ENCODE measurements at regions of chr19 and their contacts with region 1.

Region 1: DNA sequence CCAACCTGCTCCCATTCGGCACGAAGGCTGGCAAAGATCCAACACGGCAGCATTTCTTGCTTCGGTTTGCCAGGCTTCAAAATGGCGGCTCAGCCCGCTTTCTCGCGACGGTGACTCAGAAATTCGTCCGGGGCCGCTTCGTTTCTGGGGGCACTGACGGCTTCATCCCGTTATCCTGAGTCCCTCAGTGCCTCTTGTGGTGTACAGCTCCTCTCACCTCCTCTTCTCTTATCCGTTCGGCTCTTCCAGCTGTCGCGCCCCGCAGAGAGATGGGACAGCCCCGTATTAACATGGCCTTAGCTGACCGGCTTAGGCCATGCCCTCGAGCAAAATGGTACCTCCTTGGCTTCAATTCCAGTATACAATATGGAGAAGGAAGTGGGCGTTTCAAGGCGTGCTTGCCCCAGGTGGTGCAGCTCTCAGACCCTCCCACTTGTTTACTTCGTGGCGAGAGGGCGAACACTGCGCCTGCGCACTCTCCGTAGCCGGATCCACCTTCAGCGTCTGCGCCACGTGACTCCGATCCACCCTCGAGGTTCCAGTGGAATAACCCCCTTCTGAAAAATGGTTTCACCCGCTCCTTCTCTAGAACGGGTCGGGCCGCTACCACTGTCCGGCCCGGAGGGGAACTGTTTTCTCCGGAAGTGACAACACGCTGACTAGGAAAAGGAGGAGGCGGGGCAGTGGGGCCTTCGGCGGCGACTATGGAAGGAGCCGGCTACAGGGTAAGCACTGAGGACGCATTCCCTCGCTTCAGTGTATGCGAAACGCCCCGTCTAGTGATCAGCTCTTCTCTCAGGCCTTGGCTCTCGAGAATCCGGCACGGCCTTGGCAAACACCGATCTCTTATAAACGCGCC is at the starts of genes AKT1S1 and TBC1D17:
- DNase-seq: peak; percentile 100
- ATAC-seq: peak; percentile 85
- H3K4me3 ChIP-seq: peak within 1 kb of the TSS; percentile 90
- H3K27ac ChIP-seq: peak within 1 kb of the TSS; percentile 95
- H3K4me1 ChIP-seq: peaks cover 16% of the 10 kb centered on the region
- H3K27me3 ChIP-seq: no peaks in the 10 kb centered on the region
- CTCF ChIP-seq: no peak
- EP300 ChIP-seq: no peak; a peak in 1 of 4 replicates
- POLR2A ChIP-seq: peak; percentile 86
- RAD21 ChIP-seq: no peak
- polyA plus RNA-seq, gene AKT1S1: 0.43 to 1.2 TPM
- polyA plus RNA-seq, gene TBC1D17: 0.42 to 0.52 TPM

Region 2: DNA sequence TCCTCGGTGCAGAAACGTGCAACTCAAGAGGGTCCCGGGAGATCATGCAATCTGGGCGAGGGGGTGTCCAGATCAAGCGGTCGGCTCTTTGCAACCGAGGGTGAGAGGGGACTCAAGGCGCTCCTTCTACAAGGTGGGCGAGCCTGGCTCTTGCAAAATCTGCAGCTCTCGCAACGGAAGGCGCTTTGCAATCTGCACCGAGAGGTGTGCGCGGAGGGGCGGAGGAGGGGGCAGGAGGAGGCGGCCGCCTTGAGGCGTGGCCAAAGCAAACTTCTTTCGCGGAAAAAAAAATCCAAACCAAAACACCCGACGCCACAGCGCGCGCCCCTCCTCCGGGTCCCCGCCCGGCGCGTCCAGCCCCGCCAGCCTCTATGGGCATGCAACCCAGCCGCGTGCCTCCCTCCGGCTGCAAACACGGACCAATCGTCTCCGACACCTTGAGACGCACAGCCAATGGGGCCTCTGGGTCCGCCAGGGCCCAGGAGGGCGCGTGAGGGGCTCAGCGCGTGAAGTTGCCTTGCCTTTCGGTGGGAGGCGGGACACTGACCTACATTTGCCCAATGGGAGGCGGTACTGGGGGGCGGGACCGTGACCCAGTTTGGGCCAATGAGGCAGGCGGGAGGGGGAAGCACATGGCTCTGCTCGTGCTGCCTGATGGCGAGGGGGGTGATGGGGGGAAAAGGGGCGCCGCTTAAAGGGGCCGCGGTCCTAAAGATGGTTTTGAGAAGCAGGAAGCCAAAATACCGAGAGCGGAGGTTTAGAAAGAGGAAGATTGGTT is 1239.9 kb before region 1 on chr19 and contains the start of gene DBP:
- CTCF ChIA-PET with region 1: no interaction called
- POLR2A ChIA-PET with region 1: no interaction called
- RAD21 ChIA-PET with region 1: no interaction called
- SMC1A ChIA-PET with region 1: no interaction called
- in situ Hi-C with region 1: loop called (anchors 25 kb)
- intact Hi-C with region 1: no loop called
- DNase-seq: peak; percentile 96
- ATAC-seq: peak; percentile 85
- H3K4me3 ChIP-seq: peak within 1 kb of the TSS; percentile 89
- H3K27ac ChIP-seq: peak within 1 kb of the TSS; percentile 93
- H3K4me1 ChIP-seq: peaks cover 28% of the 10 kb centered on the region
- H3K27me3 ChIP-seq: no peaks in the 10 kb centered on the region
- CTCF ChIP-seq: no peak; a peak in 1 of 6 replicates
- EP300 ChIP-seq: no peak; a peak in 2 of 4 replicates
- POLR2A ChIP-seq: peak; percentile 65; the same call in 1 of the 2 replicates
- RAD21 ChIP-seq: no peak
- polyA plus RNA-seq, gene DBP: 2.0 to 2.6 TPM

Region 3: DNA sequence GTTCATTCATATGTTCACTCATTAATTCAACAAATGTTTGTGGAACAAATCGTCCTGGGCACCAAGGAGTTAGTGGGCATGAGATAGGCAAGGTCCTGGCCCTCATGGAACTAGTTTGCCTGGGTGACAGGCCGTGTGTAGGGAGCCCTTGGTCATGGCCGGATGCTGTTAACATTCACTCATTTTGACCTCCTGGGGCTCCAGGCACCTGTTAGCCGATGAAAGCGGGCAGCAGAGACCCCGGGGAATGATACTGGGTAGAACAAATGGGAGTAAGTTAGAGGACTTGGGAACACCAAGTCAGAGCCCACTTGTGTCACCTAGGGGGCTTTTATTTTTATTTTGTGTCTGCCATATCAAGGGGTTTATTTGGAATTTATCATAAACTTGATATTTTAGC is 52.6 kb before region 1 on chr19:
- CTCF ChIA-PET with region 1: no interaction called
- POLR2A ChIA-PET with region 1: no interaction called
- RAD21 ChIA-PET with region 1: no interaction called
- SMC1A ChIA-PET with region 1: no interaction called
- in situ Hi-C with region 1: no loop called
- intact Hi-C with region 1: no loop called
- DNase-seq: no peak
- ATAC-seq: no peak
- H3K4me3 ChIP-seq: no peak overlapping the region
- H3K27ac ChIP-seq: no peak overlapping the region
- H3K4me1 ChIP-seq: peaks cover 5% of the 10 kb centered on the region; the same call in 1 of the 2 replicates
- H3K27me3 ChIP-seq: no peaks in the 10 kb centered on the region
- CTCF ChIP-seq: no peak
- EP300 ChIP-seq: no peak
- POLR2A ChIP-seq: no peak
- RAD21 ChIP-seq: no peak

Region 4: GRCh38 chr19:49850473-49851342 is 26.5 kb before region 1 on chr19 and contains the start of gene PTOV1:
- CTCF ChIA-PET with region 1: no interaction called
- POLR2A ChIA-PET with region 1: interaction called, 9 read pairs
- RAD21 ChIA-PET with region 1: interaction called, 3 read pairs
- SMC1A ChIA-PET with region 1: no interaction called
- in situ Hi-C with region 1: no loop called
- intact Hi-C with region 1: loop called (anchors 2 kb)
- DNase-seq: peak; percentile 59
- ATAC-seq: peak; percentile 91
- H3K4me3 ChIP-seq: peak within 1 kb of the TSS; percentile 71
- H3K27ac ChIP-seq: peak within 1 kb of the TSS; percentile 64
- H3K4me1 ChIP-seq: peaks cover 26% of the 10 kb centered on the region
- H3K27me3 ChIP-seq: no peaks in the 10 kb centered on the region
- CTCF ChIP-seq: no peak
- EP300 ChIP-seq: no peak
- POLR2A ChIP-seq: peak; percentile 87
- RAD21 ChIP-seq: no peak
- polyA plus RNA-seq, gene PTOV1: 3.2 to 10.6 TPM

Region 5: DNA sequence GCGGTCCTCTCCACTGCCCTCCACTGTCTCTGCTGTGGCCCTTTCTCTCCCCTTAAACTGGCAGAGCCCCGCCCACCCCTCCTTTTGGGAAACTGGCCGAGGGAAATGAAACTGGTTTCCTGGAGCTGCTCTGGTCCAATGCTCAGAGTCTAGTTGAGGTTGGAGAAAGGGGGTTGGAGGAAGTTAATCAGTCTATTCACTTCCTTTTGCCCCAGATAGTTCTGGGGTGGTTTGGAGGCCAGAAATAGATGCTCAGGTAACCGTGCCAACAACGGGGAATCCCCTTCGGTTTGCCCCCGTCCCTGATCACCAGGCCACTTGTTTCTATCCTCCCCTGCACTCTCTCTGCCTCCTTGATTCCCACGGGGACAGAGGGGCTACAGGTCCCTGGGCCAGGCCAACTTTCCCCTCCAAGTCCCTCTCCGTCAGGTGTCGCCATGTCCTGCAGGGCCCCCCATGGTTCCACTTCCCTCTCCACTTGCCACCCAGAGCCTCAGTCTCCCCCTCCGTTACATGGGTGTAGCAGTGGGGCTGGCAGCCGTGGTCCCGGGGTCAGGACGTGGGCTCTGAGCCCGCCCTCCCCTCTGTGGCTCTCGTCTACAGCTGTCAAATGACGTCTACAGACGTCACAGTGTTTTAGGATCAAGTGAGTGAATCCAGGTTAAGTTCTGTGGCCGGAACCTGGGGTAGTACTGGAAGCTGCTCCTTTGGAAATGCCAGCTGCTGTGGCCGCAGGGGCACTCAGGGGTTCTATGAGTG is 19.8 kb after region 1 on chr19 and contains the start of gene IL4I1:
- CTCF ChIA-PET with region 1: no interaction called
- POLR2A ChIA-PET with region 1: interaction called, 8 read pairs
- RAD21 ChIA-PET with region 1: interaction called, 3 read pairs
- SMC1A ChIA-PET with region 1: interaction called, 5 read pairs
- in situ Hi-C with region 1: no loop called
- intact Hi-C with region 1: loop called (anchors 2 kb)
- DNase-seq: peak; percentile 96
- ATAC-seq: peak; percentile 57
- H3K4me3 ChIP-seq: peak within 1 kb of the TSS; percentile 77
- H3K27ac ChIP-seq: peak within 1 kb of the TSS; percentile 91
- H3K4me1 ChIP-seq: peaks cover 40% of the 10 kb centered on the region
- H3K27me3 ChIP-seq: no peaks in the 10 kb centered on the region
- CTCF ChIP-seq: no peak
- EP300 ChIP-seq: peak; percentile 42 to 81; a peak in 3 of 4 replicates
- POLR2A ChIP-seq: peak; percentile 69
- RAD21 ChIP-seq: no peak
- polyA plus RNA-seq, gene IL4I1: 0.62 to 1.00 TPM

Region 6: GRCh38 chr19:49929611-49930482 is 52.6 kb after region 1 on chr19:
- CTCF ChIA-PET with region 1: interaction called, 5 read pairs
- POLR2A ChIA-PET with region 1: interaction called, 23 read pairs
- RAD21 ChIA-PET with region 1: interaction called, 5 read pairs
- SMC1A ChIA-PET with region 1: interaction called, 4 read pairs
- in situ Hi-C with region 1: no loop called
- intact Hi-C with region 1: loop called (anchors 5 kb)
- DNase-seq: peak; percentile 90
- ATAC-seq: peak; percentile 83
- H3K4me3 ChIP-seq: peak overlapping the region; percentile 92
- H3K27ac ChIP-seq: peak overlapping the region; percentile 94
- H3K4me1 ChIP-seq: peaks cover 15% of the 10 kb centered on the region
- H3K27me3 ChIP-seq: no peaks in the 10 kb centered on the region
- CTCF ChIP-seq: no peak
- EP300 ChIP-seq: no peak
- POLR2A ChIP-seq: peak; percentile 94
- RAD21 ChIP-seq: no peak

Region 7: DNA sequence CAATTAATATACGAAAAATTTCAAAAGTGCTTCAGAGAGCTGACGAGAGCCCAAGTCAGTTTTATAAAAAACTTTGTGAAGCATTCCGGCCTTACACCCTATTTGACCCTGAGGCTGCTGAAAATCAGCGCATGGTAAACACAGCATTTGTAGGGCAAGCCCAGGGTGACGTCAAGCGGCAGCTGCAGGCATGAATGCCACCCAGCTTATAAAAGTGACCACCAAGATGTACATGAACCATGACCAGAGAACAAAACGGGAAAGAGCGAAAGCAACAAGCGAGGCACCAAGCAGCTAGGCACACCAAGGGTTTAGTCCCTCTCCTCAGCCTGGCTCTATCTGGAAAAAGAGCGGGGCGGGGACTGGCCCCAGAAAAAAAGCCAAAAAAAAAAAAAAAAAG is 77.7 kb after region 1 on chr19:
- CTCF ChIA-PET with region 1: no interaction called
- POLR2A ChIA-PET with region 1: no interaction called
- RAD21 ChIA-PET with region 1: no interaction called
- SMC1A ChIA-PET with region 1: no interaction called
- in situ Hi-C with region 1: no loop called
- intact Hi-C with region 1: no loop called
- DNase-seq: no peak
- ATAC-seq: no peak
- H3K4me3 ChIP-seq: no peak overlapping the region
- H3K27ac ChIP-seq: no peak overlapping the region
- H3K4me1 ChIP-seq: peaks cover 17% of the 10 kb centered on the region
- H3K27me3 ChIP-seq: no peaks in the 10 kb centered on the region; a peak in 1 of 4 replicates
- CTCF ChIP-seq: no peak
- EP300 ChIP-seq: no peak
- POLR2A ChIP-seq: no peak
- RAD21 ChIP-seq: no peak

Region 8: DNA sequence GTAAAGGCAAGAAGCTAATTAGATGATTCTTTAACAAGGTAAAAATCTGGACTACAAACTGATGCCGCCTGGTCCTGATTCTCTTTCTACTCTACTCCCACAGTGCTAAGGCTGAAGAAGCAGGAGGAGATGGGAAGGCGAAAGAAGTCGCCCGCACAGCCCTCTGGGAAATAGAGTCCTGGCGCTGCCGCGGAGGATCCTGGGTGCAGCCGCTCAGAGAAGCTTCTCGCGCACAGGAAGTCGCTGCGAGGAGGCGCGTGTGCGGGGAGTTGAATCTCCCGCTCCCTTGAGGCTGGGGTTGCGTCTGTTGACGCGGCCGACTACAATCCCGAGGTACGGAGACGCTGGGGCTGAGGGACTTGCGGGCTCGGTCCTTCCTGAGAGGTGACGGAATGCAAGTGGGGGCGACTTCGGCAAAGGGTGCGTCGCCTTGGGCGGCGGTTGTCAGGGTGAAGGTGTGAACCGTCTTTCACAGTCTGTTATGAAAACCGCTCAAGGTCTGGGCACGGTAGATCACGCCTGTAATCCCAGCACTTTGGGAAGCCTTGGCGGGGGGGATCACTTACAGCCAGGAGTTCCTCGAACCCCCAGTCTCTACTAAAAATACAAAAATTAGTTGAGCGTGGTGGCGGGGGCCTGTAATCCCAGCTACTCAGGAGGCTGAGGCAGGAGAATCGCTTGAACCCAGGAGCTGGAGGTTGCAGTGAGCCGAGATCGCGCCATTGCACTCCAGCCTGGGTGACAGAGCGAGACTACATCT is 148.7 kb after region 1 on chr19 and contains the start of gene ZNF473:
- CTCF ChIA-PET with region 1: no interaction called
- POLR2A ChIA-PET with region 1: no interaction called
- RAD21 ChIA-PET with region 1: no interaction called
- SMC1A ChIA-PET with region 1: no interaction called
- in situ Hi-C with region 1: no loop called
- intact Hi-C with region 1: no loop called
- DNase-seq: no peak
- ATAC-seq: peak; percentile 89
- H3K4me3 ChIP-seq: peak within 1 kb of the TSS; percentile 79
- H3K27ac ChIP-seq: peak within 1 kb of the TSS; percentile 81
- H3K4me1 ChIP-seq: peaks cover 16% of the 10 kb centered on the region
- H3K27me3 ChIP-seq: no peaks in the 10 kb centered on the region
- CTCF ChIP-seq: no peak
- EP300 ChIP-seq: no peak
- POLR2A ChIP-seq: peak; percentile 89
- RAD21 ChIP-seq: no peak
- polyA plus RNA-seq, gene ZNF473: 2.3 to 2.8 TPM